Psoas muscle (tissue), 8 donors: ENCODE measurements at regions of chr7 and their contacts with region 1.

Region 1: DNA sequence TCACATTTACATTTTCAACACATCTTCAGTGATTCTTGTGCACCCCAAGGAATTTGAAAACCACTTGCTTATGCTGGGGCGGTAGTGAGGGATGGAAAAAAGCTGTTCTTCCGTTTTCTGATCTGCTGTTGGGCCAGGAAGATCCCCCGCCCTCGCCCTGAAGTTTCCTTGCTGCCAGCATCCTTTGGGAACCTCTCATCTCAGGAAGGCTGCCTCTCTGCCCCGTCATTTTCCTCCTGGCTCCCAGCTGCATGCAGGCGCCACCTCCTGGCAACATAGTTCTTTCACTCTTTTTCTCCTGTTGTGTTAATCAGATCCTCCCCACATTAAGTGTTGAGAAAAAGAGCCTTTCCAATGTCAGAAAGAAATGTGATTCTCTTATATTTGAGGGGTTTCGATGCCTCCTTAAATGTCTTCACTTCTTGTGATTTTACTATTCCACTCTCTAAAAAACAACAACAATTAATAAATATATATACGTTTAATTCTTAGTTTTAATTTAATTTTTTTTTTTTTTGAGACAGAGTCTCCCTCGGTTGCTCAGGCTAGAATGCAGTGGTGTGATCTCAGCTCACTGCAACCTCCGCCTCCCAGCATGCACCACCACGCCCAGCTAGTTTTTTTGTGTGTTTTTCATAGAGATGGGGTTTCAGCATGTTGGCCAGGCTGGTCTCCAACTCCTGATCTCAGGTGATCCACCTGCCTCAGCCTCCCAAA is 122.9 kb downstream of the RALA start:
- DNase-seq: peak; percentile 74 to 81
- ATAC-seq: peak; percentile 77 to 98 (median 86)
- H3K4me3 ChIP-seq: no peak overlapping the region
- H3K27ac ChIP-seq: no peak overlapping the region
- H3K4me1 ChIP-seq: no peaks in the 10 kb centered on the region
- H3K27me3 ChIP-seq: no peaks in the 10 kb centered on the region
- CTCF ChIP-seq: peak; percentile 78

Region 2: GRCh38 chr7:39113360-39113759 is 632.9 kb before region 1 on chr7:
- intact Hi-C with region 1: no loop called
- DNase-seq: no peak
- ATAC-seq: no peak
- H3K4me3 ChIP-seq: no peak overlapping the region
- H3K27ac ChIP-seq: no peak overlapping the region
- H3K4me1 ChIP-seq: no peaks in the 10 kb centered on the region
- H3K27me3 ChIP-seq: no peaks in the 10 kb centered on the region
- CTCF ChIP-seq: no peak

Region 3: GRCh38 chr7:39580149-39580874 is 165.9 kb before region 1 on chr7:
- intact Hi-C with region 1: loop called (anchors 1 to 2 kb)
- DNase-seq: peak; percentile 62 to 78
- ATAC-seq: peak; percentile 90 to 99 (median 92)
- H3K4me3 ChIP-seq: no peak overlapping the region
- H3K27ac ChIP-seq: no peak overlapping the region
- H3K4me1 ChIP-seq: no peaks in the 10 kb centered on the region
- H3K27me3 ChIP-seq: no peaks in the 10 kb centered on the region
- CTCF ChIP-seq: peak; percentile 95